IMR-90 (cell line): ENCODE measurements at regions of chr4 and their contacts with region 1.

Region 1: DNA sequence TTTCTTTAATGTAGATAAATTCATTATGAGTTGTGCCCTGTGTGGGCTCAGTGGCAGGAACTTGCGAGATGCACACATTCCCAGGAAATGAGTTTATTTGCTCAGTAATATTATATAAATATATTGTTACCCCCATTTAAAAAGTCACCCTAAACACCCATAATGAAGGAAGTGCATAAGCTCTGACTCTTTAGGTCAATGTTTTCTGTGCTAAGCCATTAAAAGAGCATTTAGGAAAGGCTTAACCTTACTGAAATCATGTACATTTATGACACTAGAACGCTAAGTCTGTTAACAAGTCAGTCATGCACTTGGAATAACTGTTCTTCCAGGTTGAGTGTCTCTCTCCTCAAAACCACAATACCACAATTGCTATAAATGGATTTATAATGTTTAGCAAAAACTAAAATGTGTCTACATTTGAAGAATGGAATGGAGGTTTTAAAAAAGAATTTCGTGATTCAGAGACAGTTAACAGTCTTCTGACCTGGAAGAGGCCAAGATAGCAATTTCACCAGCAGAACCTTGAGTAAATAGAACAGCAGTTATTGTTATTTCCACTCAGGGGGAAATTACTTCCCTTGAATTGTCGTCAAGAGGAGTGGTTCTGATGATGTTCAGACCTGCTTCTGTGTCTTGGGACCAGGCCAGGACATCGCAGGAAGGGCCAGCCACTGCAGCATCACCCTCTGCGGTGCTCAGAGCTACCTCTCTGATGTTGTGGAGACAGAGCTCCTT is 91.1 kb upstream of the VEGFC start:
- DNase-seq: peak; percentile 88
- ATAC-seq: peak; percentile 78
- H3K4me3 ChIP-seq: peak overlapping the region; percentile 30; the same call in 1 of the 2 replicates
- H3K27ac ChIP-seq: peak overlapping the region; percentile 53
- H3K4me1 ChIP-seq: peaks cover 9% of the 10 kb centered on the region
- H3K27me3 ChIP-seq: no peaks in the 10 kb centered on the region
- CTCF ChIP-seq: no peak
- POLR2A ChIP-seq: no peak
- RAD21 ChIP-seq: no peak

Region 2: GRCh38 chr4:176680668-176681180 is 203.1 kb before region 1 on chr4:
- CTCF ChIA-PET with region 1: no interaction called
- POLR2A ChIA-PET with region 1: no interaction called
- dilution Hi-C with region 1: no loop called
- in situ Hi-C with region 1: no loop called
- intact Hi-C with region 1: no loop called
- DNase-seq: no peak
- ATAC-seq: no peak
- H3K4me3 ChIP-seq: no peak overlapping the region
- H3K27ac ChIP-seq: no peak overlapping the region
- H3K4me1 ChIP-seq: 0 out of 2 replicates have a peak, but pooled peaks cover 2% of the 10 kb centered on the region
- H3K27me3 ChIP-seq: no peaks in the 10 kb centered on the region
- CTCF ChIP-seq: no peak
- POLR2A ChIP-seq: no peak
- RAD21 ChIP-seq: no peak

Region 3: GRCh38 chr4:176838611-176839433 is 45.0 kb before region 1 on chr4:
- CTCF ChIA-PET with region 1: no interaction called
- POLR2A ChIA-PET with region 1: no interaction called
- dilution Hi-C with region 1: no loop called
- in situ Hi-C with region 1: no loop called
- intact Hi-C with region 1: loop called (anchors 5 kb)
- DNase-seq: peak; percentile 84
- ATAC-seq: peak; percentile 82
- H3K4me3 ChIP-seq: no peak overlapping the region
- H3K27ac ChIP-seq: peak overlapping the region; percentile 30; the same call in 1 of the 2 replicates
- H3K4me1 ChIP-seq: peaks cover 9% of the 10 kb centered on the region
- H3K27me3 ChIP-seq: no peaks in the 10 kb centered on the region
- CTCF ChIP-seq: no peak
- POLR2A ChIP-seq: no peak
- RAD21 ChIP-seq: no peak

Region 4: DNA sequence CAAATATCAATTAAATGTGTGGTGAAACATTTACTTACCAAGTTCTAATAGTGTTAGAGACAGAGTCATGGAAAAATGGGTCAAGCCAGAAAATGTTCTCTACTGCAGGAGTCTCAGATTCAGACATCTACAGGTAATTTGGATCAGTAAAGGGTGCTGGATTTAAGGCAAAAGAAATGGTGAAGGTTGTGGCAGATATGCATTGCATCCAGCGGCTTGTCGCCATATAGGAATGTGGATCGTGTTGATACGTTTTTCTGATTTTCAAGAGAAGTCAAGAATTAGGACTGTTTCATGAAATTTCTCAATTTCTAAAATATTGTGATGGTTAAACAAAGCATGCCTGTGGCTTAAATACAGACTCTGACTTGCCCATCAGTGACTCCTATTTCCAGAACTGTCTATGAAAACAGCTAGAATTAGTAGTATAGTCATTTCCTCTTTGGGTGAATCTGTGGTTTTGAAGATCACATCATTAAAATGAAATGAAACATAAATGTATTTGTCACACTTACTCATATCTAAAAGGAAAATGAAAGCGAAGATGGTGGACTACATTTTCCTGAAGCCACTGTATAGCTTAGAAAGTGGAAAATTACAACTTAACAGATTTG is 19.0 kb after region 1 on chr4:
- CTCF ChIA-PET with region 1: no interaction called
- POLR2A ChIA-PET with region 1: no interaction called
- dilution Hi-C with region 1: no loop called
- in situ Hi-C with region 1: no loop called
- intact Hi-C with region 1: loop called (anchors 1 kb)
- DNase-seq: peak; percentile 95
- ATAC-seq: peak; percentile 90
- H3K4me3 ChIP-seq: peak overlapping the region; percentile 36; the same call in 1 of the 2 replicates
- H3K27ac ChIP-seq: peak overlapping the region; percentile 63
- H3K4me1 ChIP-seq: peaks cover 6% of the 10 kb centered on the region; the same call in 1 of the 2 replicates
- H3K27me3 ChIP-seq: no peaks in the 10 kb centered on the region
- CTCF ChIP-seq: no peak
- POLR2A ChIP-seq: no peak
- RAD21 ChIP-seq: no peak; the same call in 1 of the 2 replicates

Region 5: DNA sequence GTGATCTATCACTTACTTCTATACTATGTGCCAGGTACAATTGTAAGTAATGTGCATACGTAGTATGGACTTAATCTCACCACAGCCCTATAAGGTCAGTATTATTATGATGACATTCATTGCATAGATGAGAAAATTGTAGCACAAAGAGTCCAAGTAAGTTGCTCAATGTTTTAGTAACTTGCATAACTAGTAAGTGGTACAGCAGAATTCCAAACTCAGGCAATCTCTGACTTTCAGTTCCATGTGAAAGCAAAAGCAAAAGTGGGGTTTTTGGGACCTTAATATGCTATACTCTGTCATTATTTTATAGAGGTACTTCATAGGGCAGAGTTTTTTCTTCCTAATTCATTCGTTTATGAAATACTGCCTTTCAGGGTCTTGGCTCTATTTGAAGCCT is 97.7 kb after region 1 on chr4:
- CTCF ChIA-PET with region 1: no interaction called
- POLR2A ChIA-PET with region 1: no interaction called
- dilution Hi-C with region 1: no loop called
- in situ Hi-C with region 1: no loop called
- intact Hi-C with region 1: loop called (anchors 5 kb)
- DNase-seq: peak; percentile 72
- ATAC-seq: peak; percentile 76
- H3K4me3 ChIP-seq: no peak overlapping the region
- H3K27ac ChIP-seq: no peak overlapping the region
- H3K4me1 ChIP-seq: peaks cover 3% of the 10 kb centered on the region; the same call in 1 of the 2 replicates
- H3K27me3 ChIP-seq: no peaks in the 10 kb centered on the region
- CTCF ChIP-seq: no peak
- POLR2A ChIP-seq: no peak
- RAD21 ChIP-seq: no peak

Region 6: GRCh38 chr4:177118596-177118995 is 234.7 kb after region 1 on chr4:
- CTCF ChIA-PET with region 1: no interaction called
- POLR2A ChIA-PET with region 1: no interaction called
- dilution Hi-C with region 1: no loop called
- in situ Hi-C with region 1: no loop called
- intact Hi-C with region 1: no loop called
- DNase-seq: peak; percentile 99
- ATAC-seq: peak; percentile 92
- H3K4me3 ChIP-seq: no peak overlapping the region
- H3K27ac ChIP-seq: peak overlapping the region; percentile 74; the same call in 1 of the 2 replicates
- H3K4me1 ChIP-seq: peaks cover 2% of the 10 kb centered on the region
- H3K27me3 ChIP-seq: no peaks in the 10 kb centered on the region
- CTCF ChIP-seq: no peak
- POLR2A ChIP-seq: no peak
- RAD21 ChIP-seq: no peak

Region 7: GRCh38 chr4:178812866-178813265 is 1929.0 kb after region 1 on chr4:
- CTCF ChIA-PET with region 1: no interaction called
- POLR2A ChIA-PET with region 1: no interaction called
- dilution Hi-C with region 1: no loop called
- in situ Hi-C with region 1: no loop called
- intact Hi-C with region 1: no loop called
- DNase-seq: no peak
- ATAC-seq: no peak
- H3K4me3 ChIP-seq: no peak overlapping the region
- H3K27ac ChIP-seq: no peak overlapping the region
- H3K4me1 ChIP-seq: no peaks in the 10 kb centered on the region
- H3K27me3 ChIP-seq: no peaks in the 10 kb centered on the region
- CTCF ChIP-seq: no peak
- POLR2A ChIP-seq: no peak
- RAD21 ChIP-seq: no peak